ENCODE measurements at regions of chr6 and their contacts with region 1.

Region 1: DNA sequence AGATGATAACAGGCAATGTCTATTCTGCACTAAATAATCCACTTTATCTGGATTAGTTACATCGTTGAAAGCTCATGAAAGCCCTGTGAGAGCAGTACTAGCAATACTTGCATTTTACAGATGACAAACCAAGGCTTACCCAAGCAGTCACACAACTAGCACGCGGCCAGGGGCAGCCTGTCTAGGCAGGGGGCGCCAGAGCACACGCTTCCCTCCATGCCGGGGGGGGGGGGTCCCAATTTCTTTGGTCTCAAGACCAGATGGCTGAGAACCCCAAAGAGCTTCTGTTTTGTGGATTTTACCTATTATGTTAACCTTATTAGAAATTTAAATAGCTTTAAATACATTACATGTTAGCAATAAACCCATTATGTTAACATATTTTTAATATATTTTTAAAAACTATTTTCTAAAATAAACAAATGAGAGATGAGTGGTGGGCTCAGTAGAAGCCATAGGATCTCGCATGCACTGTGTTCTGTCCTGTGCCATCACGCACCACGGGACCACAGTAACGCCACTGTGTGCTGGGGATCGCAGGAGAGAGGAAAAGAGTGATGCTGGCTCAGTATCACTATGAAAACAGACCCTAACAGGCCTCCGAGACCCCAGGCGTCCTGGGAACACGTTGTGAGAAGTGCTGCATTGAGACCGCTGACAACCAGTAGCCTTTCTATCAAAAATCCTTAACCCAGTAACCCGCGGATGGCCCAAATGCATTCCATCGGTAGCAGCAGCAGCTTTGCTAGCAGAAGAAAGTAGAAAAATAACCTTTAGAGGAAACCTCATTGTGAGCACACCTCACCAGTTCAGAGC is 5.3 kb upstream of the PRR18 start:
- DNase-seq: peak; percentile 44
- ATAC-seq: peak; percentile 97
- H3K4me3 ChIP-seq: no peak overlapping the region
- H3K27ac ChIP-seq: no peak overlapping the region
- H3K4me1 ChIP-seq: no peaks in the 10 kb centered on the region
- H3K27me3 ChIP-seq: no peaks in the 10 kb centered on the region; a peak in 1 of 4 replicates
- CTCF ChIP-seq: peak; percentile 90 to 91 (median 91)
- EP300 ChIP-seq: no peak
- POLR2A ChIP-seq: no peak
- RAD21 ChIP-seq: peak; percentile 91

Region 2: GRCh38 chr6:166275714-166276166 is 37.7 kb before region 1 on chr6:
- CTCF ChIA-PET with region 1: interaction called, 58 read pairs
- POLR2A ChIA-PET with region 1: interaction called, 8 read pairs
- RAD21 ChIA-PET with region 1: interaction called, 60 read pairs
- SMC1A ChIA-PET with region 1: interaction called, 29 read pairs
- in situ Hi-C with region 1: loop called (anchors 5 kb)
- intact Hi-C with region 1: loop called (anchors 1 kb)
- DNase-seq: no peak
- ATAC-seq: peak; percentile 93
- H3K4me3 ChIP-seq: no peak overlapping the region
- H3K27ac ChIP-seq: no peak overlapping the region
- H3K4me1 ChIP-seq: peaks cover 28% of the 10 kb centered on the region
- H3K27me3 ChIP-seq: no peaks in the 10 kb centered on the region; a peak in 1 of 4 replicates
- CTCF ChIP-seq: peak; percentile 99 to 100 (median 100); a peak in 5 of 6 replicates
- EP300 ChIP-seq: no peak
- POLR2A ChIP-seq: no peak
- RAD21 ChIP-seq: peak; percentile 99

Region 3: DNA sequence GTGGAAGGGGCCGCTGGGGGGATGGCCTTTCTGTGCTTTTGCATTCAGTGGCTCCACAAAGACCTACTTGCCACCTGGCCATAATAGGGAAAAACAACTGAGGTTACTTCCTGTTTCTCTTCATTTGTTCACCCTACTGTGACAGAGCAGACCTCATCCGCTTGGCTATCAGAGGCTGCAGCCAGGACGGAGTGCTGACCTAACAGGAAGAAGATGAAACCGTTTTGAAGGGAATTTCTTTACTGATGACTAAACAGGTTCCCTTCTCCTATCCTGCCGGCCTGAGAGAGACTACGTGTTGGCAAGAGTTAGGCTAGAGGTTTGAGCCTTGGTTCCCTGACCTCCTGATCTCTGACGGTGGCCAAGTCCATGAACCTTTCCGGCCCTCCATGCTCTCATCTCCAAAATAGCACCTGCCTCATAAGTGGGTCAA is 26.6 kb before region 1 on chr6:
- CTCF ChIA-PET with region 1: interaction called, 58 read pairs
- POLR2A ChIA-PET with region 1: interaction called, 8 read pairs
- RAD21 ChIA-PET with region 1: interaction called, 21 read pairs
- SMC1A ChIA-PET with region 1: interaction called, 29 read pairs
- in situ Hi-C with region 1: no loop called
- intact Hi-C with region 1: no loop called
- DNase-seq: peak; percentile 83
- ATAC-seq: peak; percentile 97
- H3K4me3 ChIP-seq: no peak overlapping the region
- H3K27ac ChIP-seq: peak overlapping the region; percentile 67
- H3K4me1 ChIP-seq: peaks cover 9% of the 10 kb centered on the region
- H3K27me3 ChIP-seq: no peaks in the 10 kb centered on the region
- CTCF ChIP-seq: no peak
- EP300 ChIP-seq: no peak
- POLR2A ChIP-seq: peak; percentile 56
- RAD21 ChIP-seq: no peak

Region 4: DNA sequence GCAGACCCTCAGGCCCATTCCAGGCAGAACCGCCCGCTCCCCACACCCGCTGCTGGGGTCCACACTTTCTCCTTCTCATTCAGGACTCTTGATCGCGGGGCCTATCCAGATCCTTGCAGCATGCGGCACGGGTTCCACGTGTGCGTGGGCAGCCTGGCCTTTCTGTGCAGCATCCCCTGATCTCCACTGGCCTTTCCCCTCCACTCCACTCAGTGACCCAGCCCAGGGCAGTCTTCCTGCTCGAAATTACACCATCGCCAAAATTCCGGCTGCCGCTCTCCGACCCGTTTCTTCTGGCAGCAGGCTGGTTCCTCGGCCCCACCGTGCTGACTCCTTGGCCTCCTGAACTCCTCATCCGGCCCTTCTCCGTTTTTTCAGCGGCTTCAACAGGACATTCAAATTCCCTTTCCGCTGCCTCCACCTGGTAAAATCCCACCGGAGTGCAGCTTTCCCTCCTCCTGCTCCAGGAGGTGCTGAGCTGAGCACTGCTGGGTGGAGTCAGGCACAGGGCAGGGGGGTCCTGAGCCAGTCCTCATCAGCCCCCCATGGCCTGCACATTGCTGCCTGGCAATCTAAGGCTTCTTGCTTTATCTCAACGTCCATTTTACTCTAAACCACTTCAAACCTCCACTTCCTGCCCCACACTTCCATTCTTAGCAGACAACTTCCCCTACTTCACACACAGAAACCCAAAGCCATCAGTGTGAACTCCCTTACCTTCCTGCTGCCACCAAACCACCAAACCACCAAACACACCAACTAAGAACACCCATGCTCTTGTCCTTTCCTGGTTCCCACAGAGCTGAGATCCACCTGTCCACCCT is 19.9 kb after region 1 on chr6:
- CTCF ChIA-PET with region 1: interaction called, 25 read pairs
- POLR2A ChIA-PET with region 1: interaction called, 5 read pairs
- RAD21 ChIA-PET with region 1: interaction called, 12 read pairs
- SMC1A ChIA-PET with region 1: interaction called, 12 read pairs
- in situ Hi-C with region 1: no loop called
- intact Hi-C with region 1: no loop called
- DNase-seq: peak; percentile 73
- ATAC-seq: peak; percentile 64
- H3K4me3 ChIP-seq: peak overlapping the region; percentile 34; the same call in 1 of the 2 replicates
- H3K27ac ChIP-seq: peak overlapping the region; percentile 93
- H3K4me1 ChIP-seq: peaks cover 43% of the 10 kb centered on the region
- H3K27me3 ChIP-seq: no peaks in the 10 kb centered on the region
- CTCF ChIP-seq: no peak
- EP300 ChIP-seq: peak; percentile 31 to 51; a peak in 2 of 4 replicates
- POLR2A ChIP-seq: peak; percentile 40; the same call in 1 of the 2 replicates
- RAD21 ChIP-seq: no peak

Region 5: GRCh38 chr6:166375013-166375412 is 61.5 kb after region 1 on chr6:
- CTCF ChIA-PET with region 1: interaction called, 211 read pairs
- POLR2A ChIA-PET with region 1: interaction called, 5 read pairs
- RAD21 ChIA-PET with region 1: interaction called, 73 read pairs
- SMC1A ChIA-PET with region 1: interaction called, 79 read pairs
- in situ Hi-C with region 1: no loop called
- intact Hi-C with region 1: no loop called
- DNase-seq: no peak
- ATAC-seq: no peak
- H3K4me3 ChIP-seq: no peak overlapping the region
- H3K27ac ChIP-seq: no peak overlapping the region
- H3K4me1 ChIP-seq: no peaks in the 10 kb centered on the region
- H3K27me3 ChIP-seq: no peaks in the 10 kb centered on the region
- CTCF ChIP-seq: no peak
- EP300 ChIP-seq: no peak
- POLR2A ChIP-seq: no peak
- RAD21 ChIP-seq: no peak

Region 6: GRCh38 chr6:166450167-166450873 is 136.9 kb after region 1 on chr6:
- CTCF ChIA-PET with region 1: no interaction called
- POLR2A ChIA-PET with region 1: no interaction called
- RAD21 ChIA-PET with region 1: no interaction called
- SMC1A ChIA-PET with region 1: no interaction called
- in situ Hi-C with region 1: no loop called
- intact Hi-C with region 1: no loop called
- DNase-seq: no peak
- ATAC-seq: no peak
- H3K4me3 ChIP-seq: no peak overlapping the region
- H3K27ac ChIP-seq: no peak overlapping the region
- H3K4me1 ChIP-seq: no peaks in the 10 kb centered on the region
- H3K27me3 ChIP-seq: no peaks in the 10 kb centered on the region
- CTCF ChIP-seq: no peak
- EP300 ChIP-seq: no peak
- POLR2A ChIP-seq: no peak
- RAD21 ChIP-seq: no peak

Region 7: DNA sequence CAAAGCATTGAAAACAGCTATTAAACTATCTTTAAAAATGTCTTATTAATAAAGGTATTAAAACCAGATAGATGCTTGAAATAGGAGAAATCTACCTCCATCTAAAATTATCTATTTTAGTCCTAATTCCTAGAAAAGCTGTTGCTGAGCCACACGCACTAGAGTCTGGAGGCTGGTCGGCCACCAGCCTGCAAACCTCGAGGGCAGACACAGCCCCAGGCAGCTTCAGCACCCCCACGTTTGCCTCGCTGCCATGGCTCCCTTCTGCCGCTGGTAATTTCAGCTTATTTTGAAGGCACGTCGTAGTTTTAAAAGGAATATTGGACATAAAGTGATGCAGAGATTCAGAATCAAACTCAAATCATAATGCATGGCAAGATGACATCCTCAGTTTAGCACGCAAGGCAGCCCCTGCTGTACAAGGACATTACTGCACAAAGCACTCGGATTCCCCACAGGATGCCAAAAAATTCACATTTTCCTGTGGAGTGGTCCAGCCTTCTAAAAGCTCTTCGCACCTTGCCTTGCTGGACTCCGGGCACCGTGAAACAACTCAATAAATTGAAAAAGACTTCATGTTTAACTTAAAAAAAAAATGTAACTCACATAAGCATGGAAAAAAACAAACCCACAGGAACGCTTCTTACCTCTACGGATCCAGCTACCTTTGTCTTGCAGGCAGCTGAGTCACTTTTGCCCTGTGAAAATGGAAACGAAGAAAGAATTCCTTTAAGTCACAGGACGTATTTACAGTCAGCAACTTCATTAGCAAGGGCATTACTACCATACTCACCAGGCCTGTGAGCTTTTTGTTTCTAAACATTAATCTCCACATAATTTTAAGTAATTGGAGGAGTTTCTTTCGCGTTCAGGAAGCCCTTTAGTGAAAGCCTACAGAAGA is 457.0 kb after region 1 on chr6:
- CTCF ChIA-PET with region 1: no interaction called
- POLR2A ChIA-PET with region 1: no interaction called
- RAD21 ChIA-PET with region 1: no interaction called
- SMC1A ChIA-PET with region 1: no interaction called
- in situ Hi-C with region 1: no loop called
- intact Hi-C with region 1: no loop called
- DNase-seq: no peak
- ATAC-seq: no peak
- H3K4me3 ChIP-seq: no peak overlapping the region
- H3K27ac ChIP-seq: no peak overlapping the region
- H3K4me1 ChIP-seq: no peaks in the 10 kb centered on the region
- H3K27me3 ChIP-seq: peaks cover 0 to 3% of the 10 kb centered on the region in 2 experiments; a peak in 1 of 4 replicates
- CTCF ChIP-seq: 0 out of 6 replicates have a peak, but pooled peaks of 1 of the 3 experiments have one; percentile 7
- EP300 ChIP-seq: no peak
- POLR2A ChIP-seq: no peak
- RAD21 ChIP-seq: no peak

Measured in GM12878 (cell line).